HepG2 (cell line): ENCODE measurements at regions of chr19 and their contacts with region 1.

Region 1: DNA sequence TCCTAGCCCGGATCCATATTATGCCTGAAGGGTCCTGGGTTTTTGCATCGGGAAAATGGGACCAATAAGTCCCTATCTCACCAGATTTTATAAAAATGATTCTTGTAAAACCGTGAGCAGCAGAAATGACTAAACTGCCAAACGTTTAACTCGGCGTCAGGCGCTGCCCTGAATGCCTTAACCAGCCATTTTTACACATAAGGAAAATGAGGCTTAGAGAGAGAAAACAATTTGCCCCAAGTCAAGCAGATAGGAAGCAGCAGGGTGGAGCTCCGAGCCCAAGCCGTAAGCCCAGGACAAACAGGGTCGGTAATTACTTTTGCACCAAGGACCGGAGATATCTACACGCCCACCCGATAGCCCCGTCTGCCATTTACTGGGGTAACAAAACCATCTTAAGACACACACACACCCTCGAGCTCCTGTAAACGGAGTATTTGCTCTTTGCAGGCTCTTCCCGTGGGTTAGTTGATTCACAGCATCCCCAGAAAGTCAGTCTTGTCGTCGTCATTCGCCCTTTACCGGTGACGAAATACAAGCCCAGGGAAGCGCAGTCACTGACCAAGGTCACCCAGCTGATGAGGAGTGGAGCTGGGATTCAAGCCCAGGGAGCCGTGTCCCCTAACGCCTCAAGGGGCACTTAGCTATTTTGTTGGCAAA is 16.0 kb upstream of the MRI1 start:
- DNase-seq: no peak
- ATAC-seq: no peak
- H3K4me3 ChIP-seq: peak overlapping the region; percentile 69 to 98 (median 90)
- H3K27ac ChIP-seq: peak overlapping the region; percentile 66
- H3K4me1 ChIP-seq: peaks cover 33% of the 10 kb centered on the region
- H3K27me3 ChIP-seq: no peaks in the 10 kb centered on the region; a peak in 1 of 5 replicates
- CTCF ChIP-seq: no peak
- EP300 ChIP-seq: no peak
- POLR2A ChIP-seq: 0 out of 4 replicates have a peak, but pooled peaks of 1 of the 2 experiments have one; percentile 6
- RAD21 ChIP-seq: no peak

Region 2: GRCh38 chr19:13731147-13731964 is 16.9 kb before region 1 on chr19:
- CTCF ChIA-PET with region 1: no interaction called
- POLR2A ChIA-PET with region 1: interaction called, 43 read pairs
- in situ Hi-C with region 1: no loop called
- intact Hi-C with region 1: loop called (anchors 1 kb)
- DNase-seq: peak; percentile 95
- ATAC-seq: peak; percentile 100
- H3K4me3 ChIP-seq: peak overlapping the region; percentile 70 to 83 (median 79)
- H3K27ac ChIP-seq: peak overlapping the region; percentile 78
- H3K4me1 ChIP-seq: peaks cover 33% of the 10 kb centered on the region
- H3K27me3 ChIP-seq: no peaks in the 10 kb centered on the region
- CTCF ChIP-seq: no peak
- EP300 ChIP-seq: no peak
- POLR2A ChIP-seq: peak; percentile 84 to 93
- RAD21 ChIP-seq: 0 out of 2 replicates have a peak, but pooled peaks have one; percentile 12

Region 3: DNA sequence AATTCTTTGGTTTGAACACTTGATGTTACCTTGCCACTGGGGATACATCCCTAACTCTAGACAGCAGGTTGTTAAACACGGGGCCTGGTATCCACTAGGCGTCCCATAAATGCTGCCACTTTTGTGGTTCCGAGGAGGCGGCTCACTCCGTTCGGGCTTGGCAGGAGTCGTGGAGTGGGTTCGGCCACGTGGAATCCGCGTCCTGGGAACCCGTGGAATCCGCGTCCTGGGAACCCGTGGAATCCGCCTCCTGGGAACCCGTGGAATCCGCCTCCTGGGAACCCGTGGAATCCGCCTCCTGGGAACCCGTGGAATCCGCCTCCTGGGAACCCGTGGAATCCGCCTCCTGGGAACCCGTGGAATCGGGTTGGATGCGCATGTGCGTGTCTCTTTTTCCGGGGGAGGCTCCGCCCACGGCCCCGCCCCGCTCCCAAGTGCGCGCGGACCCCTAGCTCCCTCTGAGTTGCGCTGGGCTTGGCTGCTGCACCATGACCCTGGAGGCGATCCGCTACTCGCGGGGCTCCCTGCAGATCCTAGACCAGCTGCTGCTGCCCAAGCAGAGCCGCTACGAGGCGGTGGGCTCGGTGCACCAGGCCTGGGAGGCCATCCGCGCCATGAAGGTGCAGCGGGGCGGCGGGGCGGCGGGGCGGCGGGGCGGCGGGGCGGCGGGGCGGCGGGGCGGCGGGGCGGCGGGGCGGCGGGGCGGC is 16.0 kb after region 1 on chr19 and contains the start of gene MRI1:
- CTCF ChIA-PET with region 1: no interaction called
- POLR2A ChIA-PET with region 1: interaction called, 21 read pairs
- in situ Hi-C with region 1: no loop called
- intact Hi-C with region 1: no loop called
- DNase-seq: peak; percentile 39
- ATAC-seq: peak; percentile 76
- H3K4me3 ChIP-seq: peak within 1 kb of the TSS; percentile 75 to 87 (median 76)
- H3K27ac ChIP-seq: peak within 1 kb of the TSS; percentile 67
- H3K4me1 ChIP-seq: peaks cover 32% of the 10 kb centered on the region
- H3K27me3 ChIP-seq: no peaks in the 10 kb centered on the region
- CTCF ChIP-seq: no peak; the same call in 1 of the 2 replicates
- EP300 ChIP-seq: no peak
- POLR2A ChIP-seq: peak; percentile 26 to 89; a peak in 3 of 4 replicates
- RAD21 ChIP-seq: no peak
- total RNA-seq, gene MRI1: 15.3 and 20.1 TPM in 2 replicates

Region 4: DNA sequence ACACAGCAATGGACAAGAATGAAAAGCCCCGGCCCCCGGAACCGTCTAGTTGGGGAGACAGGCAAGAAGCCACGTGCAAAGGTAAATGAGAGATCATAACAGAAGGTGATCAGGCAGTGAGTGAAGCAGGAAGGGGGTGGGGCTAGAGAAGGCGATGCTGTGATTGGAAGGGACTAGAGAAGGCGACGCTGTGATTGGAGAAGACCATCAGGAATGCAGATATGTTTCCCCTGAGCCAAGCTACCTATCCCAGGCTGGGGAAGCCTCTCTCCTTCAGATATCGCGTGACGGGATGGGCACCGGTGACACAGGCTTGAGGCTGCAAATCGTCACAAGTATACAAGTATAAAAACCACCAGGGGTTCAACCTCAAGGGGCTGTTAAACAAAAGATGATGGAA is 225.8 kb after region 1 on chr19:
- CTCF ChIA-PET with region 1: no interaction called
- POLR2A ChIA-PET with region 1: no interaction called
- in situ Hi-C with region 1: no loop called
- intact Hi-C with region 1: no loop called
- DNase-seq: no peak
- ATAC-seq: peak; percentile 39; the same call in 2 of the 3 replicates
- H3K4me3 ChIP-seq: no peak overlapping the region
- H3K27ac ChIP-seq: no peak overlapping the region
- H3K4me1 ChIP-seq: no peaks in the 10 kb centered on the region
- H3K27me3 ChIP-seq: no peaks in the 10 kb centered on the region
- CTCF ChIP-seq: no peak
- EP300 ChIP-seq: no peak
- POLR2A ChIP-seq: no peak
- RAD21 ChIP-seq: no peak